ENCODE measurements at regions of chr2 and their contacts with region 1.

Region 1: GRCh38 chr2:85524336-85524933 is 14.5 kb upstream of the MAT2A start:
- DNase-seq: no peak
- H3K4me3 ChIP-seq: no peak overlapping the region
- H3K27ac ChIP-seq: no peak overlapping the region
- H3K4me1 ChIP-seq: peaks cover 5% of the 10 kb centered on the region
- H3K27me3 ChIP-seq: no peaks in the 10 kb centered on the region
- CTCF ChIP-seq: no peak
- EP300 ChIP-seq: no peak
- POLR2A ChIP-seq: no peak

Region 2: DNA sequence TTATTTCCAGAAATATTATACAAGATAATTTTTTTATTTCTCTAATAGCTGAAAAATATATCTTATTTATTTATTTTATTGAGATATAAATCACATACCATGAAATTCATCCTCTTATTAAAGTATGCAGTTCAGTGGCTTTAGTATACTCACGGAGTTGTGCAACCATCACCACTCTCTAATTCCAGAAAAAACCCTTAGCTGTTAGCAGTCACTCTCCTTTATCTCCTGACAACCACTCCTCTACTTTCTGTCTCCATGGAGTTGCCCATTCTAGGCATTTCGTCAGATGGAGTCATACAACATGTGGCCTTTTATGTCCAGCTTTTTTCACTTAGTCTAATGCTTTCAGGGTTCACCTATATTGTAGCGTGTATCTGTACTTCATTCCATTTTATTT is 324.7 kb before region 1 on chr2:
- intact Hi-C with region 1: no loop called
- DNase-seq: no peak
- H3K4me3 ChIP-seq: no peak overlapping the region
- H3K27ac ChIP-seq: no peak overlapping the region
- H3K4me1 ChIP-seq: no peaks in the 10 kb centered on the region
- H3K27me3 ChIP-seq: no peaks in the 10 kb centered on the region
- CTCF ChIP-seq: no peak
- EP300 ChIP-seq: no peak
- POLR2A ChIP-seq: no peak

Region 3: GRCh38 chr2:85470850-85471800 is 53.3 kb before region 1 on chr2:
- intact Hi-C with region 1: loop called in 1 of 4 experiments (anchors 10 kb)
- DNase-seq: peak; percentile 38 to 59 (median 41)
- H3K4me3 ChIP-seq: no peak overlapping the region
- H3K27ac ChIP-seq: no peak overlapping the region
- H3K4me1 ChIP-seq: peaks cover 3% of the 10 kb centered on the region
- H3K27me3 ChIP-seq: no peaks in the 10 kb centered on the region
- CTCF ChIP-seq: no peak
- EP300 ChIP-seq: no peak
- POLR2A ChIP-seq: no peak